Activated CD4-positive, alpha-beta T cell treated with anti-CD3 and anti-CD28 coated beads for 36 hours (primary cell): ENCODE measurements at regions of chr1 and their contacts with region 1.

Region 1: DNA sequence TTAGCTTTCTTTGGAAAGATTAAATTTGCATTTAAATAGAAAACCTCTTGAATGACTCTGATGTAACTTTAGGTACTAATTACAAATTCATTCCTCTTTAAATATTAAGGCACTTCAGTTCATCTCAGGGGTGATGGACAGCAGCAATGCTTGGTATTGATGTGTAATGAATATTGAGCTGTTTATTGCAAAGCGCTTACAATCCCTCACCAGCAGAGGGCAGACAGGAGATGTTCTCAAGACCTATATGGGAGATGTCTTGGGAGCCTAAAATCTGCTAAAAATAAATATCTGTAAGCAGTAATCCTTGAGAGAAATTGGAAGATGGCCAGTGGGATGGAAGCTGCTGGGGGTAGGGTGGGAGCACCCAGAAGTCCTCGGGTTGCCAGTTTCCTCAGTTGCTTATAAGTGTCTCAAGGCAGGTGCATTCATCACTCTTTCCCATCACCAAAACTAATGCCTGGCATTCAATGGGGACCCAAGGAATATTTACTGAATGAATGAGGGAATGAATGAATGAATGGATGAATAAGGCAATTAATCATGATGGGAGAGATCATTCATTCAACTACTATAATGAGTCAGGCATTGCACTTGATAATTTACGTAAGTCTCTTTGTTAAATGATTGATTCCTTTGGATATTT is 2.3 kb downstream of the KLHDC8A start:
- DNase-seq: peak; percentile 76
- ATAC-seq: peak; percentile 88
- H3K4me3 Mint-ChIP-seq: no peak overlapping the region
- H3K27ac Mint-ChIP-seq: no peak overlapping the region
- H3K4me1 Mint-ChIP-seq: no peaks in the 10 kb centered on the region
- H3K27me3 Mint-ChIP-seq: peaks cover 10% of the 10 kb centered on the region

Region 2: DNA sequence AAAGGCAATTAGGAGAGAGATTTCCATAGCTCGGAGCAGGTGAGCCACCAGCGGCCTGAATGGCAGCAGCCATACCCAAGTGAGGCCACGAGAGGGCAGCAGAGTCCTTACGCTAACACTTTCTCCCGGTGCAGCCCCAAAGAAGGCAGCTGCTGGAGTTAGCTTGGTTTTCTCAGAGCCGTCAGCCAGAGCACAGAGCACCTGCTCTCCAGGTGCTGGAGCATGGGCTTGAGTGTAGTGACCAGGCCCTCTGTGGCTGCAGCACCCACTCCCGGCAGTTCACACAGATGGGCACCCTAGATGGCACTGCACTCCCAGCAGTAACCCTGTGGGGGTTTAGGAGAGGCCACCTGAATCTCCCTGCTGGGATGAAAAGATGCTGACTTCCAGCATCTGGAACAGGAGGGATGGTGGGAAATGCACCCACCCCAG is 80.8 kb before region 1 on chr1:
- CTCF ChIA-PET with region 1: interaction called, 24 read pairs
- POLR2A ChIA-PET with region 1: no interaction called
- intact Hi-C with region 1: no loop called
- DNase-seq: peak; percentile 92
- ATAC-seq: peak; percentile 90
- H3K4me3 Mint-ChIP-seq: no peak overlapping the region
- H3K27ac Mint-ChIP-seq: no peak overlapping the region
- H3K4me1 Mint-ChIP-seq: peaks cover 35% of the 10 kb centered on the region
- H3K27me3 Mint-ChIP-seq: no peaks in the 10 kb centered on the region

Region 3: GRCh38 chr1:205321164-205321958 is 33.0 kb before region 1 on chr1 and contains the start of gene NUAK2:
- CTCF ChIA-PET with region 1: interaction called, 13 read pairs
- POLR2A ChIA-PET with region 1: no interaction called
- intact Hi-C with region 1: no loop called
- DNase-seq: peak; percentile 90
- ATAC-seq: peak; percentile 85
- H3K4me3 Mint-ChIP-seq: peak within 1 kb of the TSS; percentile 88
- H3K27ac Mint-ChIP-seq: peak within 1 kb of the TSS; percentile 90
- H3K4me1 Mint-ChIP-seq: peaks cover 65% of the 10 kb centered on the region
- H3K27me3 Mint-ChIP-seq: no peaks in the 10 kb centered on the region
- total RNA-seq, gene NUAK2: 2.3 to 2.7 TPM

Region 4: DNA sequence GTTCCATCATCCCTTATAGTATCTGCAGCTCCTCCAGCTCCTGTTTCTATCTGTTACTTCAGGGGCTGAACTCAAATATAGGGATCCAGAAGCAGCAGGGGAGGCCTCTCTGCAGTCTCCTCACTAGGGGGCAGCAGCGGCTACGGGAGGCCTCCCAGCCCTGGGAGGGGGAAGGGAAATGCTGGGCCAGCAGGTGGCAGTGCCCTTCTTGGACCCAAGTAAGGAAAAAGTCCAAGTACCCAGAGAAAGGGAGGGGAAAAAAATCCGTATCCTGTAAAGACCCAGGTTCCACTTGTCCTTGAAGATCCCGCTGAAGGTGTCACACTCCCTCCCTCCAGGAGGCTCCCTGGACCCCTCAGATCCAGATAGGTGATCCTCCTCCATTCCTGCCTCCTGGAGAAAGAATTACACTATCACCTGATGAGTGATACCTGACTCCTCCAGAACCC is 18.7 kb before region 1 on chr1:
- CTCF ChIA-PET with region 1: interaction called, 33 read pairs
- POLR2A ChIA-PET with region 1: interaction called, 4 read pairs
- intact Hi-C with region 1: no loop called
- DNase-seq: peak; percentile 92
- ATAC-seq: peak; percentile 96
- H3K4me3 Mint-ChIP-seq: no peak overlapping the region
- H3K27ac Mint-ChIP-seq: no peak overlapping the region
- H3K4me1 Mint-ChIP-seq: no peaks in the 10 kb centered on the region
- H3K27me3 Mint-ChIP-seq: no peaks in the 10 kb centered on the region

Region 5: GRCh38 chr1:205365945-205366463 is 11.6 kb after region 1 on chr1:
- CTCF ChIA-PET with region 1: interaction called, 13 read pairs
- POLR2A ChIA-PET with region 1: no interaction called
- intact Hi-C with region 1: no loop called
- DNase-seq: no peak
- ATAC-seq: no peak
- H3K4me3 Mint-ChIP-seq: no peak overlapping the region
- H3K27ac Mint-ChIP-seq: no peak overlapping the region
- H3K4me1 Mint-ChIP-seq: no peaks in the 10 kb centered on the region
- H3K27me3 Mint-ChIP-seq: peaks cover 3% of the 10 kb centered on the region

Region 6: DNA sequence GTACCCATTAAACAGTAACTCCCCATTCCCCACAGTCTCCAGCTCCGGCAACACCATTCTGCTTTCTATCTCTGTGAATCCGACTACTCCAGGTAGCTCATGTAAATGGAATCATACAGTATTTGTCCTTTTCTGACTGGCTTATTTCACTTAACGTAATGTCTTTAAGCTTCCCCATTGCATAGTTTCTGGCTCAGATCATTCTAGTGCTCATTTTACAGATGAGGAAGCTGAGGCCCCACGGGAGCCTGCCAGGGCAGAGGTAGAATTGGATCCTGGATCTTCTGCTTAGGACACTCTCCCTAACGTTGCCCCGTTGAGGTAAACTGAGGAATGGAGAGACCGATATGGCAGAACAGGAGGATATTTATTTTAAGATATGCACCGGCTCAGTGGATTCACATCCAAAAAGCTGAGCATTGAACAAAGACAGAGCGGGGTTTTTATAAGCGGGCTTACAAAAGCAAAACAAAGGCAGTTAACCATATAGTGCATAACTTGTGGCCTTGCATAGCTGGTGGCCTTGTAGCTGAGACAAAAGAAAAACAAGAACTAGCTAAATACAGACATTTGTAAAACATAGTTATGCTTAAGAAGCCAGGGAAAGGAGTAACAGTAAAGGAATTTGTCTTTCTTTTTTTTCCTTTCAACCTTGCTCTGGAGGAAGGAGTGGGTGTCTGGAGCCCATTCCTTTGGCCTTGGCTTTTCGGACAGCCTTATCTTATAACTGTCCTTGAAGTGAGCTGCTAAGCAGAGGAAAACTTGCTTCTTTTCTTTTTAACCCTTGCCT is 17.7 kb after region 1 on chr1:
- CTCF ChIA-PET with region 1: interaction called, 13 read pairs
- POLR2A ChIA-PET with region 1: no interaction called
- intact Hi-C with region 1: no loop called
- DNase-seq: no peak
- ATAC-seq: no peak
- H3K4me3 Mint-ChIP-seq: no peak overlapping the region
- H3K27ac Mint-ChIP-seq: no peak overlapping the region
- H3K4me1 Mint-ChIP-seq: peaks cover 20% of the 10 kb centered on the region
- H3K27me3 Mint-ChIP-seq: peaks cover 3% of the 10 kb centered on the region

Region 7: DNA sequence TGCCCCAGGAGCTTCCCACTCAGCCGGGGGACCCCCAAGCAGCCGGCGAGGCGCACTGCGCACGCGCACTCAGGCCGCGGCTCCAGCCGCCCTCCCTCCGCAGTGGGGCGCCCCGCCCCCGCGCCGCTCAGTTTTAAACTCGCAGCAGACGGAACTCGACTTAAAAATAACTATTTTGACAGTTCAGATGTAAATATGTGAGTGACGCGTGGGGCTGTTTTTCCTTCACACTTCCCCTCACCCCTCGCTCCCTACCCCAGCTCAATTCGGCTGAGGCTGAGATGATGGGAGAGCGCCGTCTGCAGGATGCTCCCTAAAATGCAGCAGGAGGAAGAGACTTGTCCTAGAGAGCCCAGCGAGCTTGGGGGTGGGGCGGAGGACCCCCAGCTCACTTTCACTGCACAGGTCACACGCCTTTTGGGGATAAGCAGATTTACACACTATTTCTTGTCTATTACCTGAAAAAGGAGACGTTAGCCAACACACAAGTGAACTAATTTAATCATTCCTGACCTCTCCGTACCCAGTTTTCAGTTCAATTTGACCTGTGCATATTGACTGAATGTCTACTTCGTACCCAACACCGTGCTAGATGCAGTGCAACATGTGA is 76.4 kb after region 1 on chr1:
- CTCF ChIA-PET with region 1: interaction called, 13 read pairs
- POLR2A ChIA-PET with region 1: no interaction called
- intact Hi-C with region 1: loop called in 1 of 2 experiments (anchors 1 kb)
- DNase-seq: peak; percentile 71
- ATAC-seq: peak; percentile 82
- H3K4me3 Mint-ChIP-seq: peak overlapping the region; percentile 73
- H3K27ac Mint-ChIP-seq: peak overlapping the region; percentile 67
- H3K4me1 Mint-ChIP-seq: peaks cover 6% of the 10 kb centered on the region
- H3K27me3 Mint-ChIP-seq: peaks cover 16% of the 10 kb centered on the region